Activated CD4-positive, alpha-beta T cell treated with anti-CD3 and anti-CD28 coated beads for 36 hours (primary cell): ENCODE measurements at regions of chr17 and their contacts with region 1.

Region 1: DNA sequence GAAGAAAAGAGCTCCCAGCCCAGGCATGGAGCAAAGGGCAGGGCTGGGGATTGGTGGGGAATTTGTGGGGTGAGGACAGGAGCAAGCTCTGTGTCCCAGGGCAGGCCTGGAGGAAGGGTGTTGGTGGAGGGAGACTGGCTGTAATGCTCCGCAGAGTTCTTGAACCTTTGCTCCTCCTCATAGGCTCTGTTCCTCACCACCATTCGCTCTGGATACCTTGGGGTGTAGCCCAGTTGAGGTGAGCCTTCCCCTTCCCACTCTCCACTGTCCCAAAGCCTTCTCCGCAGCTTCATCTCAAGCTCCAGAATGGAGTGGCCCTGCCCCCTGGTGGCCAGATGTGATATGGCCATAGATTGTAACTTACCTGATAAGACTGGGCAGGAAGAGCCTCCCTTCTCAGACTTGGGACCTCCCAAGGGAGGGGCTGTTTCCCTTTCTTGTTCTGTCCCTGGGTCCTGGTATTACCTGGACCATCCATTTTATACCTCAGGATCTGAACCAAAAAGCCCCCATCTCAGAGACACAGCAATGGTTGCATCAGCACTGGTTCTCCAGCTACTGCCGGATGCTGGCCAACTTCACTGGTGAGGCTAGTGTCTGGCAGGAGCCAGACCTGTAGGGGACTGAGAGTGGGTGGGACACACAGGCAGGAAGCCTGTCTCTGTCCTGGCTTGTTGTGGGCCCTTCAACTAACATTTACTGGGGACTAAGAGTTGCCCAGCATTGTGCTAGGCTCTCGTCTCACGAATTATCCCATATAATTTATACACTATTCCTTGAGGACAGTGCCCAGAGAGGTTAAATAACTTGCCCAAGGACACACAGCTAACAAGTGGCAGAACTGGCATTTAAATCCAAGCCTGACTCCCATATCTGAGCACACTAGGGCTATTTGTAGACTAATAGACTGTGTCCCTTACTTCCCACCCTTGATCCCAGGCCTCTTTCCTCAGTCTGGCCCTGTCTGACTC is 19.1 kb upstream of the STAC2 start:
- DNase-seq: peak; percentile 93
- ATAC-seq: peak; percentile 96
- H3K4me3 Mint-ChIP-seq: no peak overlapping the region
- H3K27ac Mint-ChIP-seq: no peak overlapping the region
- H3K4me1 Mint-ChIP-seq: peaks cover 3% of the 10 kb centered on the region
- H3K27me3 Mint-ChIP-seq: no peaks in the 10 kb centered on the region

Region 2: DNA sequence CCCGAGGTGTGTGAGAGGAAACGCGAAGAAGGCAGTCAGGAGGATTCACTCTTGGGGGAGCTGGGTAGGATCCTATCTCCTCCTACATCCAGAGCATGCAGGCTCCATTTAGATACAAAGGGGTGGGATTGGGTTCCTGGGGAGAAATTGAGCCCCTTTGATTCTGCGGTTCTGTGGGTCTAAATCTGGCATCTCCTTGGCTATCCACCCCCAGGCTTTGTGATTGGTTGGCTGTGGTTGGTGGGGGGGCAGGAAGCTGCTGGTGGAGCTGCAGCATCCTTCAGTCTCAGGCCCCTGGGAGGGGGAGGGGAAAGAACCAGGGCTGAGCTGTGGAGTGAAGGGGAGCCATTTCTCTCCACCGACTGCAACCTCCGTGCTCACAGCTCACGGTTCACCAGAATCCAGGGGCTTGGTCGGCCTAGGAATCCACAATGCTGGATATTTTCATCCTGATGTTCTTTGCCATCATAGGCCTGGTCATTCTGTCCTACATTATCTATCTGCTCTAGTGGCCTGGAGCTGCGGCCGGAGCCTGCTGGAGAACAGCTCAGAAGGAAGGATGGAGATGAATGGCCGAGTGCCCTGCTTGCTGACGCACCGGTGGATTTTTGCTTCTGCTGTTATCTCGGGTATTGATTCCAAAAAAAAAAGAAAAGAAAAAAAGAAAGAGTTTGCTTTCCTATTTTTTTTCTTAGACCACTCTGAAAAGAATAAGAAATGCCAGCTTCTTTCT is 319.5 kb before region 1 on chr17 and contains the start of gene LASP1NB:
- CTCF ChIA-PET with region 1: no interaction called
- POLR2A ChIA-PET with region 1: no interaction called
- intact Hi-C with region 1: loop called in 1 of 2 experiments (anchors 5 kb)
- DNase-seq: peak; percentile 73
- ATAC-seq: peak; percentile 37
- H3K4me3 Mint-ChIP-seq: peak within 1 kb of the TSS; percentile 3
- H3K27ac Mint-ChIP-seq: peak within 1 kb of the TSS; percentile 38
- H3K4me1 Mint-ChIP-seq: peaks cover 43% of the 10 kb centered on the region
- H3K27me3 Mint-ChIP-seq: no peaks in the 10 kb centered on the region

Region 3: DNA sequence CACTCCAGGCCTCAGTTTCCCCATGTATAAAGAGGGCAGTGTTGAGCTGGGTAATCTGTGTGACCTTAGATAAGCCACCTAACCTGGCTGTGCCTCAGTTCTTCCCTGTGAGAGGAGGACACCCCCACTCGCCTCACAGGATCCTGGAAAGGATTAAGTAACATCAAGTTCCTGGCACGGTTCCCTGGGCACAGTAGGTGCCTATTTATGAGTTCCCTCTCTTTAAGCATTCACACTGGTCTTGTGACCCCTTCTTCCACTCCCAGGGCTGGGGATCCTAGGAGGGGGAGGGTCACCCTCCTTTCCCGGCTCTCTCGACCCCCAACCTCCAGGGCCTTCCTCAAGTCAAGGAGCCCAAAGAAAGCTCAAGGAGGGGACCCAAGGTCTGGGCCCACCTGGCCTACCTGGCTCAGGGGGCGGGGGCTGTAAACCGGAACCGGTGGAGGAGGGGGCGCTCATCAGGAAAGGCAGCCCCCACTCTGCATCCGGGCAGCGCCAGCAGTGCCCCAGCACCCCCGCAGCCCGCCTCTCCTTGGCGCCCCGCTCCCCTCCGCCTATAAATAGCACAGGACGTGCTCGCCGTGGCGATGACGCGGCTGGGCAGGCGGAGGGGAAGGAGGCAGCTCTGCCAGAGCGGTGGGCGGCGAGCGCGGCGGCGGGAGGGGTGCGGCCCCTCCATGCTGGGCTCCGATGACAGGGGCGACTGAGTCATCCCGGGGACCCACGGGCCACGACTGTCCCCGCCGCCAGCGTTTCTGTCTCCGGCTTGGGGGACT is 35.4 kb before region 1 on chr17:
- CTCF ChIA-PET with region 1: interaction called, 170 read pairs
- POLR2A ChIA-PET with region 1: interaction called, 7 read pairs
- intact Hi-C with region 1: loop called (anchors 1 kb)
- DNase-seq: peak; percentile 89
- ATAC-seq: peak; percentile 76
- H3K4me3 Mint-ChIP-seq: peak overlapping the region; percentile 38
- H3K27ac Mint-ChIP-seq: peak overlapping the region; percentile 24
- H3K4me1 Mint-ChIP-seq: peaks cover 32% of the 10 kb centered on the region
- H3K27me3 Mint-ChIP-seq: no peaks in the 10 kb centered on the region

Region 4: GRCh38 chr17:39261286-39261685 is 16.4 kb after region 1 on chr17:
- CTCF ChIA-PET with region 1: interaction called, 13 read pairs
- POLR2A ChIA-PET with region 1: no interaction called
- intact Hi-C with region 1: no loop called
- DNase-seq: peak; percentile 63
- ATAC-seq: peak; percentile 58
- H3K4me3 Mint-ChIP-seq: no peak overlapping the region
- H3K27ac Mint-ChIP-seq: no peak overlapping the region
- H3K4me1 Mint-ChIP-seq: no peaks in the 10 kb centered on the region
- H3K27me3 Mint-ChIP-seq: no peaks in the 10 kb centered on the region

Region 5: GRCh38 chr17:39416141-39416540 is 171.3 kb after region 1 on chr17:
- CTCF ChIA-PET with region 1: no interaction called
- POLR2A ChIA-PET with region 1: no interaction called
- intact Hi-C with region 1: no loop called
- DNase-seq: no peak
- ATAC-seq: no peak
- H3K4me3 Mint-ChIP-seq: no peak overlapping the region
- H3K27ac Mint-ChIP-seq: no peak overlapping the region
- H3K4me1 Mint-ChIP-seq: no peaks in the 10 kb centered on the region
- H3K27me3 Mint-ChIP-seq: no peaks in the 10 kb centered on the region